ENCODE measurements at regions of chr16 and their contacts with region 1.

Region 1: DNA sequence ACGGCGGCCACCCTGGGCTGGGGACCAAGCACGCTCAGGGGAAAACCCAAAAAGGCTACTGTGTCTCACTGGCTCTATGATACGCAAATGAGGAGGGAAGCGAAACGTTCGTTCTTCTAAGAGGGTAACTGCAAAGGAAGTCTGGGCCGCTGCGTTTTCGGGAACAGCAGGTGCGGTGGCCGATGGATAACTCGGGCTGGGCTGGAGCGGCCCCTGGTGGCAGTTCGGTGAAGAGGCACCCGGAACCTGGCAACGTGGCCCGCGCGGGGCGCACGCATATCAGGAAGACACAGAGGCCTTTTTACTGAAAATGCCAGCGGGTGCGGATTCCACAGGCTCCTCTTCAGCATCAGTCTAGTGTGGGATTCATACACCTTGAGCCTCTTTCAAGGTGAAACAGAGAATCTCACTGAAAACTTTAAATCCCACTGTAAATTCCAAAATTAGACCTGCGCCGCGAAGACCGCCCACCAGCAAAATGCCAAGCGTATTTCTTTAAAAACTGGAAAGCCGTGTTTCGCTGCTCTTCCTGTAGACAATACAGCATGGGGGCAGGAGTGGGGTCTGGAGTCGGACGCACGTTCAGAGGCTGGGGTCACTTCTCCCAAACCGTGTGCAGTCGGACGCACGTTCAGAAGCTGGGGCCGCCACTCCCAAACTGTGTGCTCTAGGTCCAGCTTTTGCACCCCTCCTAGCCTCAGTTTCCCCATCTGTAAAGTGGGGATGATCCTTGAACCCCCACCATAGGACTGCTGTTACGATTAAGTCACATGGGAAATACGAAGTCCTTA is 44.4 kb upstream of the METTL9 start:
- DNase-seq: peak; percentile 70
- H3K4me3 ChIP-seq: peak overlapping the region in 1 of 3 experiments; percentile 10
- H3K27ac ChIP-seq: no peak overlapping the region
- H3K4me1 ChIP-seq: peaks cover 7% of the 10 kb centered on the region
- H3K27me3 ChIP-seq: no peaks in the 10 kb centered on the region
- CTCF ChIP-seq: peak; percentile 93 to 99

Region 2: GRCh38 chr16:21184834-21185233 is 370.2 kb before region 1 on chr16:
- CTCF ChIA-PET with region 1: no interaction called
- dilution Hi-C with region 1: no loop called
- in situ Hi-C with region 1: loop called in 1 of 2 experiments (anchors 25 kb)
- intact Hi-C with region 1: loop called (anchors 1 kb)
- DNase-seq: peak; percentile 63
- H3K4me3 ChIP-seq: no peak overlapping the region
- H3K27ac ChIP-seq: no peak overlapping the region
- H3K4me1 ChIP-seq: peaks cover 17% of the 10 kb centered on the region
- H3K27me3 ChIP-seq: no peaks in the 10 kb centered on the region
- CTCF ChIP-seq: no peak

Region 3: DNA sequence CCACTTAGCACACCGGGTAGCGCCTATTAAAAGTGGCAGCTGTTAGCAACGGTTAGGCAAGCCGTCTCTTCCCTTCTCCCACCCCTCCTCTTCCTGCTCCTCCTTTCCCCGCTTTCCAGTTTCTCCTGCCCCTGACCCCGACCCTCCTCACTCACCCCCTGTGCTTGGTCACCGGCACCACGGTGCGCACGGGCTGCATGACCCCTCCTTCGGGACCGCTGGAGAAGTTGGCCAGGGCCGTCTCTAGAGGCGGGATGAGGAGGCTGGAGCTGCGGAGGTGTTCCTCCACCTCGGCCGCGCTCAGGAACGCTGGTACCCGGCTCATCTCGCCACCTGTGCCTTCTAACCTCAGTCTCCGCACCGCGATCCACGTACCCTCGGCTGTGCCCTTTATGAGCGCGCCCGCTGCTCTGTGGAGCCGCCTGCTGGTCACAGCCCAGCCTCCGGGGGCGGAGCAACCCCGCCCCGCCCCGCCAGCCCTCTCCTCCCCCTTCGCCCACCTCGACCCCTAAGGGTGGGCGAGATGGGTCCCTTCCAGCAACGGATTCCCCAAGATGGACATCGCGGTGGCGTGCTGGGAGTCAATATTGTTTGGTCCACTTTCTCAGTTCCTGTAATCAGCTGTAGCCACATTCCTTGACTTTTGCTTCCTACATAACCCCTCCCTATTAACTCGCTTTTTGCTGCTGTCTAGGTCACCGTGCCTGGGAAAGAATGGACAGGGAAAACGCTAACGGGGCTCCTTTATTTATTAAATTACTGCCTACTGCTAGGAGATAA is 276.9 kb before region 1 on chr16 and contains the start of gene CRYM:
- CTCF ChIA-PET with region 1: no interaction called
- dilution Hi-C with region 1: no loop called
- in situ Hi-C with region 1: no loop called
- intact Hi-C with region 1: loop called (anchors 5 kb)
- DNase-seq: peak; percentile 30
- H3K4me3 ChIP-seq: peak within 1 kb of the TSS; percentile 34 to 51 (median 51)
- H3K27ac ChIP-seq: no peak within 1 kb of the TSS
- H3K4me1 ChIP-seq: peaks cover 5% of the 10 kb centered on the region
- H3K27me3 ChIP-seq: peaks cover 6% of the 10 kb centered on the region
- CTCF ChIP-seq: peak; percentile 41 to 90
- total RNA-seq, gene CRYM: 0.17 to 0.54 TPM

Region 4: DNA sequence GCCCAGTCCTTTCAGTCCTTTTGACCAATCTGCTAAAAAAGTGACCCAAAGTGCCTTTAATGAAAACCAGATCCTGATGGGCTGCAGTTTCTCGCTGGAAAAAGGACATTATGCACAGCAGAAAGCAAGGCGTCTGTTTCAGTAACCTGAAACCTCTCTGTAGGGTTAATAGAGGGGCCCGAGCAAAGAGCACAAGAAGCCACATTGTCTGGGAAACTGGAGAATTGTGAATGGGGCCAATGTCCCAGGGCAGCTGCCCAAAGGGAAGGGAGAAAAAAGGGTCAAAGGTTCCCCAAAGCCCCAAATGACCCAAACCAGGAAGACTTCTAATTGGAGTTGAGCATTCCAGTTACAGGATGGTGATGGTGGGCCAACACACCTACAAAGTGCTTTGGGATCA is 111.8 kb after region 1 on chr16:
- CTCF ChIA-PET with region 1: no interaction called
- dilution Hi-C with region 1: no loop called
- in situ Hi-C with region 1: no loop called
- intact Hi-C with region 1: no loop called
- DNase-seq: no peak
- H3K4me3 ChIP-seq: no peak overlapping the region
- H3K27ac ChIP-seq: no peak overlapping the region
- H3K4me1 ChIP-seq: peaks cover 7% of the 10 kb centered on the region
- H3K27me3 ChIP-seq: no peaks in the 10 kb centered on the region
- CTCF ChIP-seq: no peak

Region 5: DNA sequence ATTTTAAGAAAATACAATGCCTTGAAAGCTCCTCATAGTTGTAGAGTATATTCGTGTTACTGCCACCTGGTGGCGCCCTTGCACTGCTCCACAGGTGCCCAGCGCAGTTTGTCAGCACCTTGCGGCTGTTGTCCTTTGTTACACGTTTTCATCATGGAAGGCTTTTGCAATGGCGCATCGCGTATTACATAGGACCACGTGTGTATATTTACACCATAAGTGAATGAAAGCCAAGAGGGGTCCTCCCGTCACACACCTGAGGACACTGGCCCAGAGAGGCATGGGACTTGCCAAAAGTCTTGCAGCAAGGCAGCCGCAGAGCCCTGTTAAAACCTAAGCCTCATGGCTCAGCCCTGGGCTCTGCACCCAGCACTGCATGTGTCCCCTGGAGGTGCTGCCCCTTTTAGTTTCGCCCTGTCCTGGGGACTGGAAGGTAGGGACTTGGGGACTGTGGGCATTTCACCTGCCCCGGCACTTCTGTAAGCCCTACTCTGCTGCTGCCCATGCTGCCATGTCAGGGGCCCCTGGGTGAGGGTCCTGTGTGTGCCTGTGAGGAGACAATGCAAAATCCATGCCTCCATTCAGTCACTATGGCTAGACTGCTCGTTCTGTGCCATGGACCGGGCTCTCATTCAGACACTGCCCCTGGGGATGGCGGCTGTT is 766.5 kb after region 1 on chr16:
- CTCF ChIA-PET with region 1: no interaction called
- dilution Hi-C with region 1: no loop called
- in situ Hi-C with region 1: loop called in 1 of 2 experiments (anchors 25 kb)
- intact Hi-C with region 1: loop called (anchors 10 kb)
- DNase-seq: peak; percentile 55
- H3K4me3 ChIP-seq: no peak overlapping the region
- H3K27ac ChIP-seq: no peak overlapping the region
- H3K4me1 ChIP-seq: peaks cover 4% of the 10 kb centered on the region
- H3K27me3 ChIP-seq: no peaks in the 10 kb centered on the region
- CTCF ChIP-seq: peak; percentile 91 to 92

Region 6: DNA sequence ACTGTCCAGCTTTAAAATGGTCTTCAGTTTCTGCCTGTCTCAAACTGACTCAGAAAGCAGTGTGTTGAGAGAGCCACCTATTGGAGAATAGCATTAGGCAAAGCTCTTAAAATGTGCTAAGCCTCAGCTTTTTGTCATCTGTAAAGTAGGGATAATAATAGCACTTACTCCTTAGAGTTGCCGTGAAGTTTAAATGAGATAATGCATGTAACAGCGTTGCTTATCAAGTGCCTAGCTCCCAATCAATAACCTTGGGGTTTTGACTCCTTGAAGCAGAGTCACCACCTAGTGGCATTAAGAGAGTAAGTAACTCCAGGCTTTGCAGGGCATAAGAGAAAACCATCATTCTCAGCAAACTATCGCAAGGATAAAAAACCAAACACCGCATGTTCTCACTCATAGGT is 1422.3 kb after region 1 on chr16:
- CTCF ChIA-PET with region 1: no interaction called
- dilution Hi-C with region 1: no loop called
- in situ Hi-C with region 1: no loop called
- intact Hi-C with region 1: loop called (anchors 10 kb)
- DNase-seq: peak; percentile 8
- H3K4me3 ChIP-seq: no peak overlapping the region
- H3K27ac ChIP-seq: no peak overlapping the region
- H3K4me1 ChIP-seq: no peaks in the 10 kb centered on the region
- H3K27me3 ChIP-seq: no peaks in the 10 kb centered on the region
- CTCF ChIP-seq: peak; percentile 40 to 58